ENCODE measurements at regions of chr17 and their contacts with region 1.

Region 1: GRCh38 chr17:27315322-27315721 is 21.4 kb downstream of the WSB1 start:
- DNase-seq: peak; percentile 84 to 90 (median 85)
- ATAC-seq: peak; percentile 65 to 87 (median 80)
- H3K4me3 ChIP-seq: no peak overlapping the region
- H3K27ac ChIP-seq: peak overlapping the region in 10 of 12 donors; percentile 47 to 86 (median 70)
- H3K4me1 ChIP-seq: peaks cover 5 to 35% (median 26%) of the 10 kb centered on the region in 12 donors
- H3K27me3 ChIP-seq: no peaks in the 10 kb centered on the region
- CTCF ChIP-seq: no peak
- POLR2A ChIP-seq: no peak

Region 2: GRCh38 chr17:27181935-27182334 is 133.4 kb before region 1 on chr17:
- intact Hi-C with region 1: no loop called
- DNase-seq: no peak
- ATAC-seq: no peak
- H3K4me3 ChIP-seq: no peak overlapping the region
- H3K27ac ChIP-seq: no peak overlapping the region
- H3K4me1 ChIP-seq: no peaks in the 10 kb centered on the region
- H3K27me3 ChIP-seq: no peaks in the 10 kb centered on the region
- CTCF ChIP-seq: no peak
- POLR2A ChIP-seq: no peak

Region 3: GRCh38 chr17:27282054-27282551 is 33.2 kb before region 1 on chr17:
- intact Hi-C with region 1: no loop called
- DNase-seq: no peak
- ATAC-seq: peak in 3 of 4 donors; percentile 52 to 92 (median 91)
- H3K4me3 ChIP-seq: peak overlapping the region in 1 of 12 donors; percentile 12
- H3K27ac ChIP-seq: peak overlapping the region in 3 of 12 donors; percentile 3 to 82 (median 23)
- H3K4me1 ChIP-seq: peaks cover 0 to 71% (median 6%) of the 10 kb centered on the region in 12 donors
- H3K27me3 ChIP-seq: no peaks in the 10 kb centered on the region
- CTCF ChIP-seq: no peak
- POLR2A ChIP-seq: no peak

Region 4: DNA sequence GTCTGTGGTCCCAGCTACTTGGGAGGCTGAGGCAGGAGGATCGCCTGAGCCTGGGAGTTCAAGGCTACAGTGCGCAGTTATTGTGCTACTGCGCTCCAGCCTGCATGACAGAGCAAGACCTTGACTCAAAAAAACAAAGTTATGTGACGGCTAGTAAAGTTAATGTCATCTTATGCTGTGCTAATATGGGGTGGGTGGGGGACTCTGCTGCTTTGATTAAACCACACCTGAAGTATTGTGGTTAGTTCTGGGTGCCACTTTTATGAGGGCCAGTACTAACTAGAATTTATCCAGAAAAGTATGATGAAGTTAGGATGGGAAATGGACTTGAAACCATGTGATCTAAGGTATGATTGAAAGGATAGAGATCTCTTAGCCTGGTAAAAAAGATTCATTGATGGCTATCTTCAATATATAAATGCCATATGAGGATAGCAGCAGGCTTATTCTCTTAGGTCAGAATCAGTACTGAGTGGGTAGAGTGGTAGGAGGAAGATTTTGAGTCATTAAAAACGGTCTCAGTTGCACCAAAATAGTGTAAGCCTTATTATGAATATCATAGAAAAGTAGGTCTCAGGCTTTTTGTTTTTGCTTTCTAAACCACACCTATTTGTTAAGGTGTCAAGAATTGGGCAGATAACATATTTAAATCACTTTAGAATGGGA is 15.8 kb before region 1 on chr17:
- intact Hi-C with region 1: loop called in 1 of 10 experiments (anchors 2 kb)
- DNase-seq: no peak
- ATAC-seq: no peak
- H3K4me3 ChIP-seq: no peak overlapping the region
- H3K27ac ChIP-seq: peak overlapping the region in 1 of 12 donors; percentile 7
- H3K4me1 ChIP-seq: peaks cover 11 to 87% (median 64%) of the 10 kb centered on the region in 12 donors
- H3K27me3 ChIP-seq: no peaks in the 10 kb centered on the region
- CTCF ChIP-seq: no peak
- POLR2A ChIP-seq: no peak

Region 5: DNA sequence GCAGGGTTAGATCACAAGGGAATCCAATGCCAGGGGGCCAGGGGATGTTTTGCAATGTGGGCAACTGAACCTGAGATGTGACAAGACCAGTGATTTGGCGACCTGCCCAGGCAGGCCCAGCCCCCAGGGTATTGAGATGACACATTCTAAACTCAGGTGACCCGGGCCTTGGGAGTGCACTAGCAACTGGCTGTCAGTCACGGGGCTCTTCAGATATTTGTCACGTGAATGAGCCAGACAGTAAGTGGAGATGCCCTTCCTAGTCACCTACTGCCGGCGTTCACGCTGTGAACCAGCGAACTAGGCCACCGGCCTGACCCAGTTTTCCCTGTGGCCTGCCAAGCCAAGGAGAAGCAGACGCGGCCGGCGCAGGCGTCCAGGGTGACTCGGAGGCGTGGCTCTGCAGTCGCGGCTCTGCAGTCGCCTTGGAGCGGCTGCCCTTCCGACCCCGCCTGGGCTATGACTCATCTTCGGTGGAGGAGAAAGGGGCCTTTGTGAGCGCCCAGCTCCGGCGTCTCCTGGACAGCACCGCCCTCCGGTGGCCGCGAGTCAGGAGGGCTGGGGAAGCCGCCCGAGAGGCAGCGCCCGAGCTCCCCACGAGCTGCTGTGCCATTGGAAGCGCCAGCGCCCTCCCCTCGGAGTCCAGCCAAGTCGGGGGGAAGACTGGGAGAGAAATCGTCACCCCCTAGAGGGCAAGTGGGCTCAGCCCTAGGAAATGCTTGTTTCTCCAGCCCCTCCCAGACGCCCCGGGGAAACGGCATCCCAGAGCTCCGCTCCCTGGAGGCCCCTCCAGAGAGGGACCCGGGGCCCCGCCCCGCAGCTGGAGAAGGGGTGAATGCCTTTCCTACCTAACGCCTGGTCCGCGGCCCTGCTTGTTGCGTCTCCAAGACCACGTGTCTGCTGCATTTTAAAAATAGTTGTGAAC is 17.4 kb after region 1 on chr17:
- intact Hi-C with region 1: loop called in 1 of 10 experiments (anchors 2 kb)
- DNase-seq: peak; percentile 98 to 100 (median 99)
- ATAC-seq: peak; percentile 95 to 97 (median 96)
- H3K4me3 ChIP-seq: peak overlapping the region in 11 of 12 donors; percentile 29 to 69 (median 57)
- H3K27ac ChIP-seq: peak overlapping the region; percentile 92 to 99 (median 96)
- H3K4me1 ChIP-seq: peaks cover 0 to 35% (median 19%) of the 10 kb centered on the region in 12 donors
- H3K27me3 ChIP-seq: no peaks in the 10 kb centered on the region
- CTCF ChIP-seq: peak; percentile 82 to 99 (median 93)
- POLR2A ChIP-seq: peak in 1 of 2 donors; percentile 48

Measured in heart left ventricle (tissue), 16 donors.